ENCODE measurements at regions of chr3 and their contacts with region 1.

Region 1: DNA sequence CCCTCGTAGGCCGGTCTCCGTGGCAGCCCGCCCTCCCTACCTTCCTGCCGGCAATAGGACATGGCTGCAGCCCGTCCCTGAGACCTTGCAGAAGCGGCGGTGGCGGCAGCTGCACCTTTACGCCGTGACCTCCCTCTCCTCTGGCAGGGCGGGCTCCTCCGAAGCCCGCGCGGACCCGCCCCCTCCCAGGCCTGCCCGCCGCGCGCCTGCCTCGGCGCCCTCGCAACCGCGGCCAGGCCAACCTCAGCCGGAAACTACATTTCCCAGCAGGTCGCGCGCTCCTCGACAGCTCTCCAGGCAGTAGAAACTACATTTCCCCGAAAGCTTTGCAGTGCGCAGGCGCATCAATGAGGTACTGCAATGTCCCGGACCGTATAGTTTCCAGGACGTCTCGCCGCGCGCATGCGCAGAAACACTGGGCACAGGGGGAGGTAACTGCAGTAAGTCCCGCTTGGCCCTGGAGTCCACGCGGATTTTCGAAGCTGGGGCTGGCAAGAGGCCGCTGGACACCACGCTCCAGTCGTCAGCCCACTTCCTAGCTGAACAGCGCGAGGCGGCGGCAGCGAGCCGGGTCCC is at the starts of genes CHCHD4 and TMEM43:
- DNase-seq: peak; percentile 99
- H3K4me3 ChIP-seq: peak within 1 kb of the TSS; percentile 99
- H3K27ac ChIP-seq: peak within 1 kb of the TSS; percentile 93
- H3K27me3 ChIP-seq: no peaks in the 10 kb centered on the region
- CTCF ChIP-seq: no peak
- polyA plus RNA-seq, gene CHCHD4: 9.8 and 11.4 TPM in 2 replicates
- polyA plus RNA-seq, gene TMEM43: 111 and 117 TPM in 2 replicates

Region 2: GRCh38 chr3:13895155-13896105 is 229.3 kb before region 1 on chr3:
- CTCF ChIA-PET with region 1: interaction called, 23 read pairs
- POLR2A ChIA-PET with region 1: interaction called, 3 read pairs
- DNase-seq: peak; percentile 44
- H3K4me3 ChIP-seq: peak overlapping the region; percentile 62
- H3K27ac ChIP-seq: no peak overlapping the region
- H3K27me3 ChIP-seq: peaks cover 13% of the 10 kb centered on the region
- CTCF ChIP-seq: no peak

Region 3: GRCh38 chr3:14137004-14137403 is 12.3 kb after region 1 on chr3:
- CTCF ChIA-PET with region 1: interaction called, 3 read pairs
- POLR2A ChIA-PET with region 1: interaction called, 50 read pairs
- DNase-seq: no peak
- H3K4me3 ChIP-seq: no peak overlapping the region
- H3K27ac ChIP-seq: no peak overlapping the region
- H3K27me3 ChIP-seq: no peaks in the 10 kb centered on the region
- CTCF ChIP-seq: no peak

Region 4: GRCh38 chr3:14144423-14145075 is 19.8 kb after region 1 on chr3:
- CTCF ChIA-PET with region 1: interaction called, 8 read pairs
- POLR2A ChIA-PET with region 1: interaction called, 50 read pairs
- DNase-seq: peak; percentile 97
- H3K4me3 ChIP-seq: peak overlapping the region; percentile 42
- H3K27ac ChIP-seq: peak overlapping the region; percentile 99
- H3K27me3 ChIP-seq: no peaks in the 10 kb centered on the region
- CTCF ChIP-seq: no peak

Region 5: DNA sequence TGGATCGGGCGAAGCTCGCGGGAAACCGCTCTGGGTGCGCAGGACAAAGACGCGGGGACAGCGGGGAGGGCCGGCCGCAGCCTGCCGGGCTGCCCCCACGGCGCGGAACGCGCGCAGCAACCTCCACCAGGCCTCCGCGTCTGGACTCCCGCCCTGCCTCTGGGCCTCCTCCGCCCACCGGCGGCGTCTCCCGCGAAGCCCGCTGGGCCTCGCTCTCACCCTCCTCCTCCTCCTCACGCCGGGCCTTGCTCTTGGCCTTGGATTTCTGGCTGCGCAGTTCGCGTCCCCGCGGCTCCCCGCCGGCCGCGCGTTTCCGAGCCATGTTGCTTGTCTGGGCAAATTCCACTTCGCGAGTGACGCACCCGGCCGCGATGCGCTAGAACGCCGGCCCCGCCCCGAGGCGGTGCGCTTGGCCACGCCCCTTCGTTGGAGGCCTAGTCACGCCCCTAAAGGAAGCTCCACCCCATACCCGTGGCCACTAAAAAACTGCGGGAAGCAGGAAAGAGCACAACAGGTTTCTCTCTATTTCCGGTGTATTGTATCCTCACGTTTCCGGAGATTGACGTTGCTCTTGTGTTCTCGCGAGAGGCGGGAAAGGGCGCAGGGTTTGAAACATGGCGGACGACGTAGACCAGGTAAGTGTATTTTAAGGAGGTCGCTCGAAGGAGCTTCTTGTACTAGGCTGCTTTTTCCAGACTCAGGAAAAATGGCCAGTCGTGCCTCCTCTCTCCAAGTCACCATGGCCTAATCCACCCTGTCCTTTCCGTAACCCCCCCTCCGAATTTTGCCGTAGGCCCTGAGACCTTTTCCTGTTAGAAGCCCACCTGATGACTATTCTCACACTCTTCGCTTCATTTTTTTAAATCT is 53.8 kb after region 1 on chr3 and contains the starts of genes LSM3 and XPC:
- CTCF ChIA-PET with region 1: no interaction called
- POLR2A ChIA-PET with region 1: interaction called, 45 read pairs
- DNase-seq: peak; percentile 98
- H3K4me3 ChIP-seq: peak within 1 kb of the TSS; percentile 98
- H3K27ac ChIP-seq: peak within 1 kb of the TSS; percentile 94
- H3K27me3 ChIP-seq: no peaks in the 10 kb centered on the region
- CTCF ChIP-seq: no peak
- polyA plus RNA-seq, gene LSM3: 7.4 and 11.9 TPM in 2 replicates
- polyA plus RNA-seq, gene XPC: 38.4 and 39.0 TPM in 2 replicates

Region 6: DNA sequence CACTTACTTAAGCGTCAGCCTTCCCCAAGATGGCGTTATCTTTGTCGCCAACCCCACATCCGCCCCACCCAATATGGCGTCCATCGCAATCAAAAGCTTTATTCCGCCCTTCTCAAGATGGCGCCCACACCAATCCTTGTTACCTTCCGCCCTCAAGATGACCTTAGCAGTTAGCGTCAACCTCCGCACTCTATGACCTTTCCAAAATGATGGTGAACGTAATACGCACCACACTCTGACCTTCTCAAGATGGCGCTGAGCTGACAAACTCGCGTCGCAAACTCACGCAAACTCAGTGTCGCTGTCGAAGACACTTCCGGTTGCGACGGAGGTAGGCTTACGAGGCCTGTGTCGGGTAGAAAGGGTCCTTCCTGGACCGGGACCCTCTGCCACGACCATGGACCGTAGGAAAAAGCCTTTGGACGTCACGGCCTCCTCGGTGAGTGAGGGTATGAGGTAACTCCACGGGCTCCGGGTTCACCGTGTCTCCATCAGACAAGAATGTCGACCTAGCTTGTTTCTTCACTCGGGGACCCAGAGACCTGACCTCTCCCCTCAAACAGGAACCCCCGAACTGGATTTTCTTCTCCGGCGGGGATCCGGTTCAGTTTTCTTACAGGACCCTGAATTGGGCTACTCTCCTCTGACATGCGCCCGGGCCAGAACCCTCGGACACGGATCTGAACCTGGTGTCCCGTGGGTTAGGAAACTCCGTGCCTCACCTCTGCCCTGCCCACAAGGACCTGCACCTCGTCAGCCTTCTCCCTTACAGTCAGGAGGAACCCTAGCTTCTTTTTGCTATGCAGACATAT is 526.9 kb after region 1 on chr3 and contains the start of gene CCDC174:
- CTCF ChIA-PET with region 1: no interaction called
- POLR2A ChIA-PET with region 1: interaction called, 13 read pairs
- DNase-seq: peak; percentile 97
- H3K4me3 ChIP-seq: peak within 1 kb of the TSS; percentile 98
- H3K27ac ChIP-seq: peak within 1 kb of the TSS; percentile 88
- H3K27me3 ChIP-seq: peaks cover 2% of the 10 kb centered on the region
- CTCF ChIP-seq: 0 out of 2 replicates have a peak, but pooled peaks have one; percentile 5
- polyA plus RNA-seq, gene CCDC174: 10.0 and 13.9 TPM in 2 replicates

Region 7: DNA sequence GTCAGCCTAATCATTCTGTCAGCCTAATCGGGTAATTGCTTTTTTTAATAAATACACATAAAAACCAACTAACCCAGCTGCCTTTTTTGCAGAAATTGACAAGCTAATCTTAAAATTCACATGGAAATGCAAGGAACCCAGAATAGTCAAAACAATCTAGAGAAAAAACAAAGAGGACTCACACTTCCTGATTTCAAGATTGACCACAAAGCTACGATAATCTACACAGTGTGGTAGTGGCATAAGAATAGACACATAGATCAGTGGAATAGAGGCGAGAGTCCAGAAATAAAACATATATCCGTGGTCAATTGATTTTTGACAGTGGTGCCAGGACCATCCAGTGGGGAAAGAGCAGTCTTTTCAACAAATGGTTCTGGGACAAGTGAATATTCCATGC is 547.9 kb after region 1 on chr3:
- CTCF ChIA-PET with region 1: no interaction called
- POLR2A ChIA-PET with region 1: no interaction called
- DNase-seq: no peak
- H3K4me3 ChIP-seq: no peak overlapping the region
- H3K27ac ChIP-seq: no peak overlapping the region
- H3K27me3 ChIP-seq: no peaks in the 10 kb centered on the region
- CTCF ChIP-seq: no peak

Measured in AG04450 (cell line).